OCI-LY7 (cell line): ENCODE measurements at regions of chr21 and their contacts with region 1.

Region 1: DNA sequence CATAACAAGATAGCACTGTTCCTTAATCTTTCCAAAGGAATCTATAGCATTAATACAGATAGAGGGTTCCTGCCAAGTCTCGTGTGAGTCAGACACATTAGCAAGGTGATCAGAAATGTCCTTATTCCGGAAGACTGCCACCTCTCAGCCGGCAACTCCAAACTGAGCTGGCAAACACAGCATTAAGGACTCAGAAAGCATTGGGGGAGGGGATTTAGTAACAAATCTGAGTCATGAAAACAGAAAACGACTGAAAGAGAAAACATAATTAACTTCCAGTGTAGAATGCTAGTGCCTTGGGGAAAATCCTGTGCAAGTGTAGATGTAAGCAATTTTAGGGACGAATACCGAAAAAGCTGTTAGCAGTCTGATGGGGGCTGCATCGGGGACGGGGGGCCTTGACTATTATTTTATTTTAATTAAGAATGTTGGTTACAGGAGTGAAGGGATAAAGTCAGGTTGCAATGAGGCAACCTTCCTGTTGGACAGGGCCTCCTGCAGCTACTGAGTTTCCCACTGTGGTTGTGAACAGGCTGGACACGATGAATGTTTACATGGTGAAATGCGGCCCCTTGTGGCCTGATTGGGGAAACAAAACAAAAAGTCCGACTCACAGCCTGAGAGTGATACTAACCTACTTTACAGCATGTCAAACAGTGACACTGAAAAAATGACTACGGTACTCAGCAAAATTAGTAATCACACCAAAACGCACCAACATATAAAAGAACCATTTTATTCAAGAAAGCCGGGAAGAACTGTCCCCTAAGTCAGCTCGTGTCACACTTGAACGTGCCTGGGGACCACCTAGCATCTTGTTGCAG is 20.7 kb downstream of the MIS18A start:
- DNase-seq: peak; percentile 62
- H3K4me3 ChIP-seq: no peak overlapping the region
- H3K27ac ChIP-seq: no peak overlapping the region
- H3K4me1 ChIP-seq: no peaks in the 10 kb centered on the region
- CTCF ChIP-seq: peak; percentile 86

Region 2: DNA sequence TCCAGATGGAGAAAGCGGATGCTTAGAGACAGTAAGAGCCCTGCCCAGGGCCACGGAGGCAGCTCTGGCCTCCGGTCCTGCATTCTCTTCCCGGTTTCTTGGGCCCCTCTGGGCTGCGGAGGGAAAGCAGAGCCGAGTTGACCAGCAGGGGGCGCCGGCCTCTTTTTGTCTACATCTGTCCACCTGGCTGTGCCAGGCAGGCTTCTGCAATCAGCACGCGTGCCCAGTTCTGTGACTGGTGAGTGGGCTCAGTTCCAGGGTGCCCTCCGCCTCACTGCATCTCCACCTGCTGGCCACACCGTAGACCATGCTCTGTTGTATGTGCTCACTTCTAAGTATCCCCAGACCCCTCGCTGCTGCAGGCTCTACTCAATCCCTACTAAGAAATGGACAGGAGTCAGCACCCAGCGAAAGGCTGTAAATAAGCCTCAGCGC is 392.1 kb before region 1 on chr21:
- CTCF ChIA-PET with region 1: no interaction called
- POLR2A ChIA-PET with region 1: no interaction called
- intact Hi-C with region 1: loop called (anchors 1 kb)
- DNase-seq: peak; percentile 73
- H3K4me3 ChIP-seq: no peak overlapping the region
- H3K27ac ChIP-seq: no peak overlapping the region
- H3K4me1 ChIP-seq: no peaks in the 10 kb centered on the region
- CTCF ChIP-seq: peak; percentile 92

Region 3: GRCh38 chr21:32096411-32096810 is 161.8 kb before region 1 on chr21:
- CTCF ChIA-PET with region 1: no interaction called
- POLR2A ChIA-PET with region 1: no interaction called
- intact Hi-C with region 1: loop called (anchors 10 kb)
- DNase-seq: peak; percentile 11
- H3K4me3 ChIP-seq: no peak overlapping the region
- H3K27ac ChIP-seq: no peak overlapping the region
- H3K4me1 ChIP-seq: no peaks in the 10 kb centered on the region
- CTCF ChIP-seq: peak; percentile 64

Region 4: GRCh38 chr21:32494934-32495703 is 236.9 kb after region 1 on chr21:
- CTCF ChIA-PET with region 1: no interaction called
- POLR2A ChIA-PET with region 1: no interaction called
- intact Hi-C with region 1: no loop called
- DNase-seq: no peak
- H3K4me3 ChIP-seq: no peak overlapping the region
- H3K27ac ChIP-seq: no peak overlapping the region
- H3K4me1 ChIP-seq: no peaks in the 10 kb centered on the region
- CTCF ChIP-seq: no peak